K562 (cell line): ENCODE measurements at regions of chr16 and their contacts with region 1.

Region 1: DNA sequence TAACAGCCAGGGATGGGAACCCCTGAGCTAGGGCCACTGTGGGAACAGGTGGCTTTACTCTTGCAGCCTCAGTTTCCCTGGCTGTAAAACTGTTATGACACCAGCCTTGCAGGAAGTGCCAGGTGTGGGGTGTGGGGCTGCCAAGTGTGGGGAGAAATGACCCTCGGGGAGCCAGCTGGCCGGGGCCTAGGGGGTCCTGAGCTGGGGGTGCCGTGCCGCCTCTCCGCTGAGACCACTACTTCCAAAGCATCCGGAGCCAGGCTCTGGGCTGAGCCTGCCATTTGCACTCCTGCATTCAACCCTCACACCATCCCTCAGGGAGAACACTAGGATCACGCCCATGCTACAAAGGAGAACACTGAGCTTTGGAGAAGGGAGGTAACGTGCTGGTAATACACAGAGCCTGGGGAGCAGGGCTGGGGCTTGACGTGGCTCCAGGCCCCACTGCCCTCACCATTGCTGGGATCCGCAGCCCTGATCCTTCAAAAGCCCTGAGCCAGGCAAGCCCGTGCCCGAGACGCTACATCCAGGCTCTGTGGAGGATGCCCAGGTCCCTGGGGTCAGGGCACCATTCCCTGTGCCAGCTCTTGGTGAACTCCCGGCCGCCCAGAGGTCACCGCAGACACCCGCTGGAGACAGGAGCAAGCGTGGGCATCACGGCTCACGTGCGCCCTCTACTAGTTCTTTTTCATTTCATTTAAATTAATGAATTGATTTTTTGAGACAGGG is 28.8 kb upstream of the GINS2 start:
- DNase-seq: peak; percentile 76 to 86 (median 78)
- ATAC-seq: peak; percentile 78
- H3K4me3 ChIP-seq: no peak overlapping the region
- H3K27ac ChIP-seq: no peak overlapping the region
- H3K4me1 ChIP-seq: peaks cover 3 to 37% of the 10 kb centered on the region in 2 experiments; a peak in 4 of 5 replicates
- H3K27me3 ChIP-seq: peaks cover 18 to 54% of the 10 kb centered on the region in 2 experiments; a peak in 4 of 5 replicates
- CTCF ChIP-seq: peak; percentile 80 to 84 (median 80)
- EP300 ChIP-seq: no peak
- POLR2A ChIP-seq: no peak
- RAD21 ChIP-seq: peak; percentile 64 to 79

Region 2: GRCh38 chr16:85420501-85421337 is 296.8 kb before region 1 on chr16:
- CTCF ChIA-PET with region 1: interaction called, 3 read pairs
- POLR2A ChIA-PET with region 1: no interaction called
- in situ Hi-C with region 1: loop called (anchors 10 kb)
- intact Hi-C with region 1: loop called (anchors 5 kb)
- DNase-seq: peak; percentile 92 to 94 (median 92)
- ATAC-seq: peak; percentile 83
- H3K4me3 ChIP-seq: no peak overlapping the region
- H3K27ac ChIP-seq: no peak overlapping the region; the same call in 2 of the 3 replicates
- H3K4me1 ChIP-seq: peaks cover 23 to 87% of the 10 kb centered on the region in 2 experiments
- H3K27me3 ChIP-seq: no peaks in the 10 kb centered on the region
- CTCF ChIP-seq: peak; percentile 100
- EP300 ChIP-seq: no peak
- POLR2A ChIP-seq: no peak
- RAD21 ChIP-seq: peak; percentile 98 to 99

Region 3: DNA sequence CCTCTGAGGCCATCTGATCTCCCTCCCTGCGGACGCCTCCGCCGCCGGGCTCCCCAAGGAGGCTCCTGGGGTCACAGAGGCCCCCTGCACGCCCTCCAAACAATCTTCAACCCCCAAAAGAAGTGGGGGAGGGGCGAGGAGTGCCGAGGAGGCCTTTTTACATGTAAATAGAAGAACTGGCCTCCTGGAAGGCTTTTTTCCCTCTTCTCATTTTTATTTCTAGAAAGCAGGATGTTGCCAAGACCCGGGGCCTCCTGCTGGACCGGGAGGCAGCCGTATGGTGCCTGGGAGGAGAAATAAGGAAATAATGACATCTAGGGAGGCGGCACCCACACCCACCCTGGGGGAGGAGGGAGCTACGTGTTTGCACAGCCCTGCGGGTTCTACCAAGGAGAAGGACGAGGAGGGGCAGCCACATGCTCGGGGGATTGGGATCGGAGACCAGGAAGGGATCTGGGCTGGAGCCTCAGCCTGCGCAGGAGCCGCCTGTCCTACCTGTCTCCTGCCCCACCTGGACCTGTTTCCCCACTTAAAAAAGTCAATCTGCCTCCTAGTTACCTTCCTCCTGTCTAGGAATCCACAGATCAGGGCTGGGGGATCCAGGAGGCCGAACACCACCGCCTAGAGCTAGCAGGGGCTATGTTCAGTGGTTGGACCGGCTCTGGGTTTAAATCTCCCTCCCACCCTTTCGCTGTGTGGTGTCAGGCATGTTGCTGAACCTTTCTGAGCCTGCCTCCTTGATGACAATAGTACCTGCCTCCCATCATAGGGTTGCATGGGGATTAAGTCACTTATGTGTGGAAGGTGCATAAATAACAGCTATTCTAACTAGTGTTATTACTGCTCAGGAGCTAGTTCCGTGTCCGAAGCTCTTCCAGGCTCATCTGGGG is 280.1 kb before region 1 on chr16:
- CTCF ChIA-PET with region 1: no interaction called
- POLR2A ChIA-PET with region 1: no interaction called
- in situ Hi-C with region 1: no loop called
- intact Hi-C with region 1: loop called (anchors 1 kb)
- DNase-seq: peak; percentile 73 to 86 (median 80)
- ATAC-seq: peak; percentile 58
- H3K4me3 ChIP-seq: peak overlapping the region; percentile 7; the same call in 1 of the 2 replicates
- H3K27ac ChIP-seq: peak overlapping the region; percentile 72
- H3K4me1 ChIP-seq: peaks cover 26 to 57% of the 10 kb centered on the region in 2 experiments
- H3K27me3 ChIP-seq: no peaks in the 10 kb centered on the region
- CTCF ChIP-seq: peak in 1 of 3 experiments; percentile 4; a peak in 1 of 6 replicates
- EP300 ChIP-seq: 0 out of 2 replicates have a peak, but pooled peaks have one; percentile 1
- POLR2A ChIP-seq: no peak
- RAD21 ChIP-seq: peak in 1 of 2 experiments; percentile 10; a peak in 1 of 4 replicates

Region 4: GRCh38 chr16:85569615-85570212 is 147.8 kb before region 1 on chr16:
- CTCF ChIA-PET with region 1: no interaction called
- POLR2A ChIA-PET with region 1: no interaction called
- in situ Hi-C with region 1: no loop called
- intact Hi-C with region 1: loop called (anchors 10 kb)
- DNase-seq: peak; percentile 62 to 96 (median 79)
- ATAC-seq: peak; percentile 60
- H3K4me3 ChIP-seq: peak overlapping the region; percentile 40
- H3K27ac ChIP-seq: peak overlapping the region; percentile 97
- H3K4me1 ChIP-seq: peaks cover 90 to 98% of the 10 kb centered on the region in 2 experiments
- H3K27me3 ChIP-seq: no peaks in the 10 kb centered on the region; a peak in 1 of 5 replicates
- CTCF ChIP-seq: no peak
- EP300 ChIP-seq: peak; percentile 71; the same call in 1 of the 2 replicates
- POLR2A ChIP-seq: peak; percentile 84
- RAD21 ChIP-seq: no peak

Region 5: DNA sequence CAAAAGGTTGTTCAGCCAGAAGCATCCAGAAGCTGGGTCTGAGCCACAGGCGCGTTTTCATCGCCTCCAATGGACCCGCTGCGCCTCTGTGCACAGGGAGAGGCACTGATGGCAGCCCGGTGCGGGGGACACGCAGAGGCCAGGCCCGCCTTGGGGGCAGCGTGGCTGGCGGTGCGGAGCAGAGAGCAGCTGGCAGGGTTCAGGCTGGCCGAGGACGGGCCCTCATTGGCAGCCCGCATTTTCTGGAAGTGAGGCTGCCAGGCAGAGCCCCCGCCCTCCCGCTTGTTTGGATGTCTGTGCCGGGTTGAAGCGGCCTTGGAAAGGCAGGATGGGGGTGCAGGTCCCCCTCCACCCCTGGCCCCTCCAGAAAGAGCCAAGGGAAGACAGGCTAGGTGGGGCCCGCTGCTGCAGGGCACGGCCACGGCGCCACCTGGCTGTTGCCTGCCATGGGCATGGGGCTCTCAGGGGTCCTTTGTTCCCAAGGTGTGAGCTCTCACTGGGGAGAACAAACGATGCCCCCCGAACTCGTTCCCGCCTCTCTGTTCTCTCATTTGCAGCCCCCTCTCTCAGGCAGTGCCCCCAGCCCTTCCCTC is 85.7 kb before region 1 on chr16:
- CTCF ChIA-PET with region 1: no interaction called
- POLR2A ChIA-PET with region 1: no interaction called
- in situ Hi-C with region 1: no loop called
- intact Hi-C with region 1: no loop called
- DNase-seq: no peak
- ATAC-seq: no peak
- H3K4me3 ChIP-seq: no peak overlapping the region
- H3K27ac ChIP-seq: no peak overlapping the region
- H3K4me1 ChIP-seq: peaks cover 4 to 76% of the 10 kb centered on the region in 2 experiments; a peak in 2 of 5 replicates
- H3K27me3 ChIP-seq: no peaks in the 10 kb centered on the region
- CTCF ChIP-seq: no peak
- EP300 ChIP-seq: no peak
- POLR2A ChIP-seq: no peak
- RAD21 ChIP-seq: no peak

Region 6: DNA sequence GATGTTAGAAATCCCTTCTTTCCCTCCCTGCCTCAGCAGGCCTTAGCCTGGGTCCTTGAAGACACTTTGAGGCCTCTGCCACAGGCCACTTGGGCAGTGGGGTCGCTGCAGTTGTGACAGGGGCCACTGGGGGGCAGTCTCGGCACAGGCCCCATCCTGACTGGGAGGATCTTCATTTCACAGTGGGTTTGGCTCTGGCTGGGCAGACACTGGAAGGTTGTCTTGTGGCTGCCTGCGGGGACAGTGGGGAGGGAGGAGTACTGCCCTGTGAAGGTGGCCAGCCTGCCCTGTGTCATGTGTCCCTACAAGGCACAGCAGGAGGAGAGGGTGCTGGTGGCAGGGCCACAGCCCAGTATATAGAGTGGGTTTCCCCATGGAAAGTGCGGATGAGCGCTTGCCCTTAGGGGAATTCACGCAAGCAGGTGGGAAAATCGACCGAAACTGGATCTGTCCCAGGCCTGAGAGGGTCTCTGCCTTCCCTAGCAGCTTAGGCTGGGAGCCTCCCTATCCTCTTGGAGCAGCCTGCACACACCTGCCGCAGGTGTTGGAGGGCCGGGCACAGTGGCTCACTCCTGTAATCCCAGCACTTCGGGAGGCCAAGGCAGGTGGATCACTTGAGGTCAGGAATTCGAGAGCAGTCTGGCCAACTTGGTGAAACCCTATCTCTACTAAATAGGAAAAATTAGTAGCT is 57.6 kb before region 1 on chr16:
- CTCF ChIA-PET with region 1: interaction called, 10 read pairs
- POLR2A ChIA-PET with region 1: no interaction called
- in situ Hi-C with region 1: no loop called
- intact Hi-C with region 1: no loop called
- DNase-seq: peak; percentile 75 to 84 (median 80)
- ATAC-seq: peak; percentile 91
- H3K4me3 ChIP-seq: no peak overlapping the region
- H3K27ac ChIP-seq: no peak overlapping the region
- H3K4me1 ChIP-seq: peaks cover 0 to 33% of the 10 kb centered on the region in 2 experiments; a peak in 1 of 5 replicates
- H3K27me3 ChIP-seq: no peaks in the 10 kb centered on the region
- CTCF ChIP-seq: peak; percentile 81 to 96 (median 88)
- EP300 ChIP-seq: no peak
- POLR2A ChIP-seq: peak; percentile 49
- RAD21 ChIP-seq: peak in 1 of 2 experiments; percentile 61; a peak in 3 of 4 replicates

Region 7: DNA sequence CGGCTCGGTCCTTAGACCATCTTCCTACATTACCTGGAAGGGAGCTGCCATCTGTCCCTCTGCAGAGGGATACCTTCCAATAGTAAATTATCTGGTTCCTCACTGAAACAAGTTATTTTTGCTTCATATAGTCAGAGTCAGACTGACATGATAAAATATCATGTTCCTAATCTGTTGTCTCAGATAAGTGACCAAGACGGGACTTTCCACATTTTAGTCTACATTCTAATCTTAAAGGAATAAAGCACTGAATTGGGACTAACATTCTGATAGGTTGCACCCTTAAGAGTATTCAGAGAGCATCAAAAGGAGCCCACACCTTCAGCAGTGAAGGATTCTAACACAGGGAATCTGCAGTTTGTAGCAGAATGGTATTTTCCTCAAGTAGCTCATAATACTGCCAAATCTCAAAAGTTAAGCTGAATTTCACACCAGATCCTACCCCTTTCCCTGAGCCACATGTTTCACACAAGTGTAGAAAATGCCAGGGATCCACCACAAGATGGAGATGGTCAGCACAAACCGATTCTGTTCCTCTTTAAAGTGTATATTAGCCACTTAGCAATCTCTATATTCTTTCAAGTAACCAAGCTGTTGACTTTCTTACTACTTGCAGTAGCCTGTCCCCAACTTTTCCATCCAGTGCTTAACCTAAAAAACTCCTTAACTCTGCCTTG is 42.2 kb before region 1 on chr16:
- CTCF ChIA-PET with region 1: interaction called, 35 read pairs
- POLR2A ChIA-PET with region 1: interaction called, 5 read pairs
- in situ Hi-C with region 1: no loop called
- intact Hi-C with region 1: loop called (anchors 2 kb)
- DNase-seq: peak in 2 of 4 experiments; percentile 43 to 44
- ATAC-seq: peak; percentile 70
- H3K4me3 ChIP-seq: no peak overlapping the region
- H3K27ac ChIP-seq: no peak overlapping the region
- H3K4me1 ChIP-seq: peaks cover 0 to 4% of the 10 kb centered on the region in 2 experiments; a peak in 3 of 5 replicates
- H3K27me3 ChIP-seq: no peaks in the 10 kb centered on the region
- CTCF ChIP-seq: peak; percentile 51 to 61 (median 55)
- EP300 ChIP-seq: no peak
- POLR2A ChIP-seq: peak; percentile 48
- RAD21 ChIP-seq: peak in 1 of 2 experiments; percentile 47; a peak in 2 of 4 replicates

Region 8: DNA sequence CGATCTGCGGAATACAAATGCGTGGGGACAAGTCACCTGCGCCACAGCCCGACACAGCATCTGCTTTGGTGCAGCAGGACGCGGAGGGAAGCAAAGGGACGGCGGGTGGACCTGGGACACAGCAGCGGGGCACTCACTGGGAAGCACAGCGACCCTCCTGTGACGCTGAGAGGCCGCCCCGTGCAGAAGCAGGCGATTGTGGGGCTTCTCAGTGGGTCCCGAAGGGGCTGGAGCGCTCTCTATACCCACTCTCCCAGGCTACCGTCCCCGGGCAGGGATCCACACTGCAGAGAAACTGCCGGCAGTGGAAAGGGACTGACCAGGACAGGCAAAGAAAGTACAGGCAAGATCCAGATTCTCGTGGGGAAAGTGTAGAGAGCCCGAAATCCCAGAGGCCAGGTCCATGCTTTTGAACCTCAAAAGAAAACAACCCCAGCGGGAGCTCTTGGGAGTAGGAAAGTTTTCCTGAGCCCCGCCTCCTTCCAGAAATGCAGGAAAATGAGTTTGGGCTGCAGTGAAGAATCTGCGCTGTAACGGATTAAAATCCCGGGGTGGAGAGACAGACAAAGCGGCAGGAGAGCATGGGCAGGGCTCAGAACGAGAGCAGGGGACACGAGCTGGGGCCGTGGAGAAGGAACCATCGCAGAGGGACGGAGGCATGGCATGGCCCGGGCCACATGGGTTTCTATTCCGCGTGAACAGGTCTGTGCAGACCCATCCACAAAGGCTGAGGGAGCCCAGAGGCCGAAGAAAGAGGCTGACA is 94.7 kb after region 1 on chr16:
- CTCF ChIA-PET with region 1: no interaction called
- POLR2A ChIA-PET with region 1: no interaction called
- in situ Hi-C with region 1: no loop called
- intact Hi-C with region 1: no loop called
- DNase-seq: no peak
- ATAC-seq: no peak
- H3K4me3 ChIP-seq: no peak overlapping the region
- H3K27ac ChIP-seq: no peak overlapping the region
- H3K4me1 ChIP-seq: peaks cover 0 to 9% of the 10 kb centered on the region in 2 experiments; a peak in 1 of 5 replicates
- H3K27me3 ChIP-seq: peaks cover 37 to 49% of the 10 kb centered on the region in 2 experiments; a peak in 4 of 5 replicates
- CTCF ChIP-seq: no peak
- EP300 ChIP-seq: no peak
- POLR2A ChIP-seq: no peak
- RAD21 ChIP-seq: no peak